ENCODE measurements at regions of chr1 and their contacts with region 1.

Region 1: DNA sequence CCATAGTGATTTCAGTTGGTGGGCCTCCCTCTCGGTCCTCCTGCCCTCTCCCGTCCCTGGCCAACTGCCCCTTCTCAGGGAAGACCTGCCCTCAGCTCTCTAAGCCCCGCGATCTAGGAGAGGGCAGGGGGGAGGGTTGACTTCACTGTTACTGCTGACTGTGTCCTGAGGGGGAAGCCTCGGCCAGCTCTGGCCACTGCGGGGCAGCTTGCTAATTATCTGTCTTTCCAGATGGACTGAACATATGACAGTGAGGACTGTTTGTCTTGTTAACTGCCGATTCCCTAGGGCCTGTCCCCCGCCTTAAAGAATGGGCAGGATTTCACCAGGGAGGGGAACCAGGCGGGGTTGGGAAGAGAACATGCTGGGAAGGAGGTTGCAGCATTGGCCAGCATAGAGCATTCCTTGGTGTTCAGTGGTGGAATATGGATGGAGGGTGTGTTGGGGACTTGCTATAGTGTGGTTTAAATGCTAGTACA is 22.9 kb downstream of the NIPAL3 start:
- DNase-seq: no peak

Region 2: DNA sequence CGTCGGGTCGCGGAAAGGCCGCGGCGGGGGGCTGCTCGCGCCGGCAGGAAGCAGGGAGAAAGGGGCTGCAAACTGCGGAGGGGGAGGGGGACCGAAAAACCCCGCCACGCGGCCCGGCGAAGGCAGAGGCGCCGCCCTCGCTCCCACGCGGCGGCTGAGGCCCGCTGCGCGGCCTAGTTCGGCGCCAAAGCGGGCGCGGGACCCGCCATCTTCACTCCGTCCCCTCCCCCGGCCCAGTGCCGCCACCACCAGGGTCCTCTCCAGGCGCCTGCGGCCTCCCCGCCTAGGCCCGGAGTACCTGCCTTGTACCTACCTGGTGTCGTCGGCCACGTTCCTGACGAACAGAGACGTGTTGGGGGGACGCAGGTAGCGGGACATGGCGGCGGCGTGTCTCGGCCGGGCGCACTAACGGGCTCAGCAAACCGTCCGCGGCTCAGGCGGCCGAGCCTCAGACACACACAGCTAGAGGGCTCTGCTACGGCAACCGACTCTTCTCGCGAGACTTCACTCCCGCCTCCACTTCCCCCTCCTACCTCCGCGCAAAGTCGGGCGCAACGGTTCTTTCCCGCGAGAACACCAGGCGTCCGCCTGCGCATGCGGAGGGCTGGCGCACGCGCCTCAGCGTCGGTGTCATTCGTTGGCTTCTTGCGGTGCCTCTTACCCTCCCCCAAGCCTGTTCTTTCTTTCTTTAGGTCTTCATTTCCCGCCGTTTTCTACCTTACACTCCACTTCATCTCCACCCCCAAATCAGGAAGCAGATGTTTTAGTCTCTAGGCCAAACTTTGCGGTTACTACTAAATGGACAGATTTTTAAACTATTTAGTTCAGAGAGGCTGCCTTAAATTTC is 458.4 kb before region 1 on chr1 and contains the start of gene SRSF10:
- intact Hi-C with region 1: no loop called
- DNase-seq: peak; percentile 100
- total RNA-seq, gene SRSF10: 74.1 to 77.4 TPM

Region 3: DNA sequence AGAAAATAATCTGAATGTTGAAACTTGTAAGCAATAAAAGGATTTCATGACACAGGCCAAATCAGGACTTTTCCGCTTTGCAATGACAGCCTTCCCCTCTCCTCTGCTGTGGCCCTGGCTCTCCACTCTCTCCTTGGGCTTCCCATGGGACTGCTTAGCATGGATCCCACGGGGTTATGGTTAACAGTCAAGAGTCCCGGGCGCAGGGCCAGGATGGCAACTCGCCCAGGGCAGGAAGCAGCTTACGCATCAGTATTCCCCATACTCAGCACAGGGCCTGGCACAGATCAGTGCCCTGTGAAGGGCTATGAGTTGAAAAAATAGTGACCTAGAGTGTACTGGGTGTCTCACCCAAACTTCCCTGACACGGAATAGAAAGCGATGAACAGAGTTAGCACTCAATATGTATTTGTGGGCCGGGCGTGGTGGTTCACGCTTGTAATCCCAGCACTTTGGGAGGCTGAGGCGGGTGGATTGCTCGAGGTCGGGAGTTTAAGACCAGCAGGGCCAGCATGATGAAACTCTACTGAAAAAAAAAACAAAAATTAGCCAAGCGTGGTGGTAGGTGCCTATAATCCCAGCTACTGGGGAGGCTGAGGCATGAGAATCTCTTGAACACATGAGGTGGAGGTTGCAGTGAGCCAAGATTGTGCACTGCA is 148.4 kb before region 1 on chr1:
- intact Hi-C with region 1: no loop called
- DNase-seq: peak; percentile 93

Region 4: DNA sequence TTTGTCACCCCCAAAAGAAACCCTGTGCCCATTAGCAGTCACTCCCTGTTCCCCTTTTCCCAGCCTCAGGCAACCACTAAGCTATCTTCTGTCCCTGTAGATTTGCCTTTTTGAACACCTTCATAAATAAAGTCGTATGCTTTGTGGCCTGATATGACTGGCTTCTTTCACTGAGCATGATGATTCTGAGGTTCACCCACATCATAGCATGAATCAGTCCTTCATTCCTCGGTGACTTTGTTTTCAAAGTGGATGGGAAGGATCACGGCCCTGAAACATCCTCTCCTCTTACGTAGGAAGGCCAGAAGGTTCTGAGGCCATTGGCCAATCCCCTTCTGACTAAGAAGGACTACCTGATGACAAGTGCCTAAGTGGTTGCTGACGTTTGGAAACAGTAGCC is 16.2 kb after region 1 on chr1:
- intact Hi-C with region 1: loop called in 1 of 2 experiments (anchors 2 kb)
- DNase-seq: no peak

Measured in posterior vena cava (tissue), 2 donors.